IMR-90 (cell line): ENCODE measurements at regions of chr7 and their contacts with region 1.

Region 1: DNA sequence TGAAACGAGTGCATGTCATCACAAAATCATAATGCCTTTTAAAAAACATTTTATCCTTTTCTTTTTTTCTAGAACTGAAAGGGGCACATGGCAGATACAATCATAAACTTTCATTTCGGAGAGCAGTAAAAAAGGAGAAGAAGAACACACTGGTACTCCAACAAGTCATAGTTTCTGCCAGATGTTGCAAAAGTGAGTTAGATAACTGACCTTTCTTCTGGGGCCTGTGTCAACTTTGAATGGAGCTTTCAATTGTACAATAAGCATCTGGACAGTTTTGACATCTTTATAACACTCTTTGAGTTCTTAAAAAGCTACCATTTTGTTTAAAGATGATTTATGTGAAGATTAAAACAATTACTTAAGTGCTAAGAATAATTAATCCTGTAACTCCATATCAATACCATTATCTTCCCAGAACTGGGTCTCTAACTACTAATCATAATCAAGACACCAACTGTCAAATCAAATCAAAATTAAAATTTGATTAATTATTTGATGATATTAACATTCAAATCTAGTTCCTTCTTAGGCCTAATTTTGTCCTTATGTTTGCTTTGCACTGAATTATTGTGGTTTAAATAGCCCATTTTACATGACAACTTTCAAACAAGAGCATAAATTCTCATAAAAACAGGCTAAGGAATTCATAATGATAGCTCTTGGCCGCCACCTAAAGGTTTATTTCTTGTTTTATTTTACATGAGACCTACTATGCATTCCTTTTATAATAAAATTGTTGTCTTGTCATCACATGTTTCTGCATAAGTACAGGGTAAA is 19.5 kb upstream of the ITGB8 start:
- DNase-seq: peak; percentile 67
- ATAC-seq: peak; percentile 61
- H3K4me3 ChIP-seq: no peak overlapping the region
- H3K27ac ChIP-seq: no peak overlapping the region; the same call in 1 of the 2 replicates
- H3K4me1 ChIP-seq: peaks cover 3% of the 10 kb centered on the region
- H3K27me3 ChIP-seq: no peaks in the 10 kb centered on the region
- CTCF ChIP-seq: peak; percentile 58
- POLR2A ChIP-seq: no peak
- RAD21 ChIP-seq: peak; percentile 73

Region 2: GRCh38 chr7:19754521-19755116 is 556.5 kb before region 1 on chr7:
- CTCF ChIA-PET with region 1: interaction called, 4 read pairs
- POLR2A ChIA-PET with region 1: no interaction called
- dilution Hi-C with region 1: no loop called
- in situ Hi-C with region 1: loop called (anchors 25 kb)
- intact Hi-C with region 1: loop called (anchors 1 kb)
- DNase-seq: peak; percentile 12
- ATAC-seq: no peak
- H3K4me3 ChIP-seq: no peak overlapping the region
- H3K27ac ChIP-seq: no peak overlapping the region
- H3K4me1 ChIP-seq: no peaks in the 10 kb centered on the region
- H3K27me3 ChIP-seq: no peaks in the 10 kb centered on the region
- CTCF ChIP-seq: peak; percentile 62
- POLR2A ChIP-seq: no peak
- RAD21 ChIP-seq: peak; percentile 57

Region 3: DNA sequence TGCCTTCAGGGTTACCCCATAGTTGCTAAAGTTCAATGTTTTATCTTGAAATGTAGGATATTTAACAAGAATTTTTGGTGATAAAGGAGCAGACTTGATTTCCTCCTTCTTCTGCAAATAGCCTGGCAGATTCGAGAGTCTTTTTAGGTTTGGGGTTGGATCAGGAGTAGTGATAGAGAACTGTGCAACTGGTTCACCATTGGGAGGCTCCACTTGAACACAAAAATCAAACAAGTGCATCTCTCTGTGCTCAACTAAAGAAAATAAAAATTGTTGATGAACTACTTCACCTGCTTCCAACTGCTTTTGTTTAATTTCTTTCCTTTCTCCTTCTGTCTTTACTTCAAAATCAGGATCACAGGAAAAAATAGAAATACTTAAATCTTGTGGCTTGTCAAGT is 152.5 kb before region 1 on chr7:
- CTCF ChIA-PET with region 1: no interaction called
- POLR2A ChIA-PET with region 1: no interaction called
- dilution Hi-C with region 1: no loop called
- in situ Hi-C with region 1: no loop called
- intact Hi-C with region 1: loop called (anchors 1 kb)
- DNase-seq: peak; percentile 36
- ATAC-seq: peak; percentile 42; the same call in 1 of the 2 replicates
- H3K4me3 ChIP-seq: no peak overlapping the region
- H3K27ac ChIP-seq: no peak overlapping the region
- H3K4me1 ChIP-seq: no peaks in the 10 kb centered on the region
- H3K27me3 ChIP-seq: no peaks in the 10 kb centered on the region
- CTCF ChIP-seq: peak; percentile 50
- POLR2A ChIP-seq: no peak
- RAD21 ChIP-seq: peak; percentile 52

Region 4: DNA sequence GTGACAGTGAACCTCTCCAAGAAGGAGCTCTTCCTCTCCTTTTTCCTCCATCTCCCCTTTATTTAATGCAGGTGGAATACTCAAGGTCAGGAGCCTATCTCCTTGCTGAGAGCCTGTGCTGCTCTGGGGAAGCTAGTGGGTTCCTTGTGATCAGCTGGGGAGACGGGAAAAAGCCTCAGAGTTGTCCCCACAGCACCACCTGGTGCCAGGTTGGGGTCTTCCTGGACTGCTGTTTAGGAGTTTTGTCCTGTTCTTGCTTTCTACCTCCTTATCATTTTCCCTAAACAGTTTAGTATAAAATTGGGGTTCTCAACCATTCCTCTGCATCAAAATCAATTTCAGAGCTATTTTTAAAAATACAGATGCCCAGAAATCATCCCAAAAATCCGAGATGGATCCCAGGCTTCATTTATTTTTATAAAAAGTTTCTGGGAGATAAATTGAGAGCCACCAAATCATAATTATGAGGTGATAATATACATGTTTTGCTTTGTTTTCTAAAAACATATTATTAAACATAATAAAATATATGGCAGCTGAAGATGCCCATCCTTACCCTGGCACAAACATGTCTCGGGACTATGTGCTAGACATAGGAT is 138.3 kb before region 1 on chr7:
- CTCF ChIA-PET with region 1: no interaction called
- POLR2A ChIA-PET with region 1: no interaction called
- dilution Hi-C with region 1: no loop called
- in situ Hi-C with region 1: no loop called
- intact Hi-C with region 1: loop called (anchors 5 kb)
- DNase-seq: peak; percentile 40
- ATAC-seq: peak; percentile 63; the same call in 1 of the 2 replicates
- H3K4me3 ChIP-seq: no peak overlapping the region
- H3K27ac ChIP-seq: no peak overlapping the region
- H3K4me1 ChIP-seq: no peaks in the 10 kb centered on the region
- H3K27me3 ChIP-seq: no peaks in the 10 kb centered on the region
- CTCF ChIP-seq: peak; percentile 37
- POLR2A ChIP-seq: no peak
- RAD21 ChIP-seq: peak; percentile 36; the same call in 1 of the 2 replicates

Region 5: DNA sequence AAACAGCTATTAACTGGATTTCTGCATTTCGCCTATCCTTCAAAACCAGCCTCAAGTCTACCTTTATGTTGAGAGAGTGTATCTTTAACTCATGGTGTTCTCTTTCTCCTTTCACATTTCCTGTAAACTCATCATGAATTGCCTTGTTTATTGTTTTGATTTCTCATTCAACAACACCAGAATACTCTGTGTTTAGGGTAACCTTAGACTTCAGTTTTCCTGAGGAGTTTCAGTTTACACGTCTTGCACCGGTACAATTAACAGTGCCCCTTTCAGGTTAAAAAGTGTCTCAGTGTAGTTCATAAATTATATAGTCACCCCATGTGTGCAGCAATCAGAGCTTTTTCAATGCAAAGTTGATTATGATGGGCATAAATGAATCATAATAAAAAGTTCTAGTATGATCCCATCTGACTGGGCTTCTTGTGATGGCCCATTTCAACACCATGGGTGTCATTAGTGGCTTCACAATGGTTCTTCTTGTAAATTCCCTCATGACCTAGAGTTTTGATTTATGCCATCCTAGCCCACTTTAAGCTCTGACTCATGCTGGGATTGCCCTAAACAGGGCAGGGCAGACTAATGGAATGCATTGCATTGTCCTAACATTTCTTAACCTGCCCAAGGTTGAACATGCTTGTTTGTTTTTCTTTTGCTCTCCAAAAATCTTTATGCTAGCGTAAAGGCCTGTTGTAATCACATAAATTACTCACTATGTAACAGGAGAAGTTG is 41.6 kb after region 1 on chr7:
- CTCF ChIA-PET with region 1: no interaction called
- POLR2A ChIA-PET with region 1: no interaction called
- dilution Hi-C with region 1: no loop called
- in situ Hi-C with region 1: no loop called
- intact Hi-C with region 1: no loop called
- DNase-seq: peak; percentile 31
- ATAC-seq: peak; percentile 15; the same call in 1 of the 2 replicates
- H3K4me3 ChIP-seq: no peak overlapping the region
- H3K27ac ChIP-seq: no peak overlapping the region
- H3K4me1 ChIP-seq: peaks cover 6% of the 10 kb centered on the region; the same call in 1 of the 2 replicates
- H3K27me3 ChIP-seq: no peaks in the 10 kb centered on the region
- CTCF ChIP-seq: no peak
- POLR2A ChIP-seq: no peak
- RAD21 ChIP-seq: no peak